Activated T-helper 2 cell treated with anti-CD3 and anti-CD28 coated beads, Interferon-gamma antibody, Interleukin-2, Interleukin-4, amounts not matched to agents 10 μg/mL and 5 μg/mL and 100 μg/mL, durations not matched to agents 14 hours and 24 hours and 36 hours (primary cell): ENCODE measurements at regions of chr20 and their contacts with region 1.

Region 1: GRCh38 chr20:37095599-37096414 is at the start of gene RBL1:
- DNase-seq: peak; percentile 88
- H3K4me3 Mint-ChIP-seq: peak within 1 kb of the TSS; percentile 96
- H3K27ac Mint-ChIP-seq: peak within 1 kb of the TSS; percentile 100
- H3K4me1 Mint-ChIP-seq: peaks cover 34% of the 10 kb centered on the region
- H3K27me3 Mint-ChIP-seq: peaks cover 3% of the 10 kb centered on the region
- total RNA-seq, gene RBL1: 45.7 and 49.1 TPM in 2 replicates

Region 2: GRCh38 chr20:37011147-37011546 is 84.7 kb before region 1 on chr20:
- intact Hi-C with region 1: loop called (anchors 10 kb)
- DNase-seq: no peak
- H3K4me3 Mint-ChIP-seq: no peak overlapping the region
- H3K27ac Mint-ChIP-seq: no peak overlapping the region
- H3K4me1 Mint-ChIP-seq: peaks cover 23% of the 10 kb centered on the region
- H3K27me3 Mint-ChIP-seq: no peaks in the 10 kb centered on the region

Region 3: GRCh38 chr20:37071481-37071911 is 24.3 kb before region 1 on chr20:
- intact Hi-C with region 1: loop called (anchors 2 kb)
- DNase-seq: peak; percentile 28
- H3K4me3 Mint-ChIP-seq: peak overlapping the region; percentile 52
- H3K27ac Mint-ChIP-seq: peak overlapping the region; percentile 81
- H3K4me1 Mint-ChIP-seq: peaks cover 35% of the 10 kb centered on the region
- H3K27me3 Mint-ChIP-seq: no peaks in the 10 kb centered on the region

Region 4: GRCh38 chr20:37178839-37179670 is 83.2 kb after region 1 on chr20 and contains the starts of genes MROH8 and RPN2:
- intact Hi-C with region 1: loop called (anchors 2 kb)
- DNase-seq: peak; percentile 94
- H3K4me3 Mint-ChIP-seq: peak within 1 kb of the TSS; percentile 89
- H3K27ac Mint-ChIP-seq: peak within 1 kb of the TSS; percentile 98
- H3K4me1 Mint-ChIP-seq: peaks cover 31% of the 10 kb centered on the region
- H3K27me3 Mint-ChIP-seq: peaks cover 8% of the 10 kb centered on the region
- total RNA-seq, gene MROH8: 1.1 and 1.3 TPM in 2 replicates
- total RNA-seq, gene RPN2: 217 and 229 TPM in 2 replicates